Calu3 (cell line): ENCODE measurements at regions of chr5 and their contacts with region 1.

Region 1: DNA sequence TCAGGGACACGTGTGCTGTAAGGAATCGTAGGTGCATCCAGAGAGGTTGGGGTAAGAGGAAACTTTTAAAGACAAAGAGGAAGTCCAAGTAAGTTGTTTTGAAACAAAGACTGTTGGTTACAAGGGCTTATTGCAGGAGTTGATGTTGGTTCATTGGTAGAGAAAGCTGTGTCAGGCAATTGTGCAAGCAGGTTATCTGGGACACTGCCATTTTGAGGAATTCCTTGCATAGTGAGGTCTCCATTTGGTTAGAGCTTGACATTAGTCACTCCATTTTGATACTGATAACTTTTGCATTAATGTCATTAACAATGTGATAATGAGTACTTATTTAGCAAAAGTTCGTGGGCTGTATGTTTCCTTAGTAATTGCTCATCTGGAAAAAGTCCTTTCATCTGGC is 24.9 kb downstream of the CNOT6 start:
- DNase-seq: no peak
- H3K4me3 Mint-ChIP-seq: no peak overlapping the region
- H3K27ac Mint-ChIP-seq: no peak overlapping the region
- H3K4me1 Mint-ChIP-seq: peaks cover 34% of the 10 kb centered on the region
- H3K27me3 Mint-ChIP-seq: no peaks in the 10 kb centered on the region
- CTCF ChIP-seq: no peak

Region 2: GRCh38 chr5:180366326-180366725 is 152.8 kb before region 1 on chr5:
- CTCF ChIA-PET with region 1: no interaction called
- intact Hi-C with region 1: no loop called
- DNase-seq: no peak
- H3K4me3 Mint-ChIP-seq: no peak overlapping the region
- H3K27ac Mint-ChIP-seq: no peak overlapping the region
- H3K4me1 Mint-ChIP-seq: no peaks in the 10 kb centered on the region
- H3K27me3 Mint-ChIP-seq: peaks cover 48% of the 10 kb centered on the region
- CTCF ChIP-seq: no peak

Region 3: GRCh38 chr5:180557217-180557809 is 38.2 kb after region 1 on chr5:
- CTCF ChIA-PET with region 1: no interaction called
- intact Hi-C with region 1: loop called (anchors 1 kb)
- DNase-seq: no peak
- H3K4me3 Mint-ChIP-seq: no peak overlapping the region
- H3K27ac Mint-ChIP-seq: no peak overlapping the region
- H3K4me1 Mint-ChIP-seq: no peaks in the 10 kb centered on the region
- H3K27me3 Mint-ChIP-seq: no peaks in the 10 kb centered on the region
- CTCF ChIP-seq: no peak

Region 4: DNA sequence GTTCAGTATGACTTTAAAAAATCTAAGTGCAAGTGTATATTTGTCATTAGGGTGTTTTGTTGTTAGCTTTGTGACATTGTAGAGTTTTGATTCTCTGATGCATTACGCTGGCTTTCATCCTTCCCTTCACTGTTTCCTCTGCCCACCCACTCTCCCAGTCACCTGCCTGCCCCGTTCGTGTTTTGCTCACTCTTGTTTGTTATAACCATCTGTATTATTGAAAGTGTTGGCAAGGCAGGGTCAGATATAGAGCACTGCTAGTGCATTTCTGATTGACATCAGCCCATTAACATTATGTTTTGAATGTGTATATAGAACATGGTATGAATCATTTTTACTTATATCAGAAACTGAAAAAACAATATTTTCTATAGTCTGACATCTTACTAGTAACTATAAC is 44.9 kb after region 1 on chr5:
- CTCF ChIA-PET with region 1: no interaction called
- intact Hi-C with region 1: loop called (anchors 5 kb)
- DNase-seq: no peak
- H3K4me3 Mint-ChIP-seq: no peak overlapping the region
- H3K27ac Mint-ChIP-seq: no peak overlapping the region
- H3K4me1 Mint-ChIP-seq: no peaks in the 10 kb centered on the region
- H3K27me3 Mint-ChIP-seq: no peaks in the 10 kb centered on the region
- CTCF ChIP-seq: no peak

Region 5: DNA sequence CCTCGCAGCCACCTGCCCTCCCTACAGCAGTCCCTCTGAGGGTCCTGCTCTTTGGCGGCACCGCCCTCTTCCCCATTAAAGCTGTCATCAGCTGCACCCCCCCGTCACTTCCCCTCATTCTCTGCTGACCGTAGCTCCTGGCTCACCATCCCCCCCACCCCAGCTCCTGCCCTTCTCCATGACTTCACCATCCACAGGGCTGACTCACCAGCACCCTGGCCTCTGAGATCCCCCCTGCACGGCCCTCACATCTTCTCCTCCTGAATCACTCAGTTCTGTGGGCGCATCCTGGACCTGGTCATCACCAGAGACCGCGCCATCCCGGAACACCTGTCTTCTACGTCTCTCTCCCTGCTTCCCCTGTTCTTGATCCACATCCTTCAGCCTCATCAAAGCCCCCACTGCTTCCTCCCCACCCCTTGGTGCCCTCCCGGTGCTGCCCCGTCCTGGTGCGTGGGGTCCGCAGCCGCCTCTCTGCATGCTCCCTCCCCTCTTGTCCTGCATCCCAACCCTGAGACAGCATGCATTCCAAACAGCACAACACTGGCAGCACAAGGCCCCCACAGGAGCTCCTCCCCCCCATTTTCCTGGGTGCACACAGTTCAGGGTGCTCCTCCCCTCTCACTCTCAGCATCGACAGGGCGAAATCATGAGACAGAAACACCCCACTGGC is 117.4 kb after region 1 on chr5:
- CTCF ChIA-PET with region 1: no interaction called
- intact Hi-C with region 1: no loop called
- DNase-seq: no peak
- H3K4me3 Mint-ChIP-seq: no peak overlapping the region
- H3K27ac Mint-ChIP-seq: no peak overlapping the region
- H3K4me1 Mint-ChIP-seq: no peaks in the 10 kb centered on the region
- H3K27me3 Mint-ChIP-seq: peaks cover 70% of the 10 kb centered on the region
- CTCF ChIP-seq: no peak